ENCODE measurements at regions of chr3 and their contacts with region 1.

Region 1: DNA sequence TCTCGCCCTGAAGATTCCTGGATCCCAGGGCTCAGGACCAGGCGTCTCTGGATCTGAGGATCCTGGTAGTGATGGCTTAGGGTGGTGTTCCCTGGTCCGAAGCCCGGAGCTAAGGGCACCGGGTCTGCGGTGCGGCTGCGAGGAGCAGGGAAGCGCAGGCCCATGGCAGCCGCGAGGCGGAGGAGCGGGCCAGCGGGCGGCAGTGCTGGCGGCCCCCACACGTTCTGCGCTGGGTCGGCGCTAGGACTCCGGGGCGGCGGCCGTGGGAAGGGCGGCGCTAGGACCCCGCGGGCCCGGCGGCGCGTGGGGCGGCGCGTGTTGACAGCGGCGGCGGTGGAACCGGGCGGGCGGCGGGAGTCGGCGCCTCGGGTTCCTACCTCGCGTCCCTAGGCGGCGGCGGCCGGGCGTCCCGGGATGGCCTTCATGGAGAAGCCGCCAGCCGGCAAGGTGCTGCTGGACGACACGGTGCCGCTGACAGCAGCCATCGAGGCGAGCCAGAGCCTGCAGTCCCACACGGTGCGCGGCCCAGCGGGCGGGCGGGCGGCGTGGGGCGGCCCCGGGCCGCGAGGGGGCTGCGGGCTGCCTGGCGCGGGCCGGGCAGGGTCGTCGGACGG is at the start of gene PXK:
- ATAC-seq: peak; percentile 86 to 94 (median 90)
- H3K4me3 ChIP-seq: peak within 1 kb of the TSS; percentile 69 to 85 (median 78)
- H3K27ac ChIP-seq: peak within 1 kb of the TSS; percentile 22 to 38
- H3K4me1 ChIP-seq: peaks cover 11 to 13% of the 10 kb centered on the region in 2 donors
- total RNA-seq, gene PXK: 8.4 to 34.6 (median 18.5) TPM

Region 2: GRCh38 chr3:58520403-58521335 is 188.0 kb after region 1 on chr3:
- in situ Hi-C with region 1: loop called in 2 of 9 experiments (anchors 25 kb)
- ATAC-seq: peak; percentile 25 to 72 (median 47)
- H3K4me3 ChIP-seq: no peak overlapping the region
- H3K27ac ChIP-seq: no peak overlapping the region
- H3K4me1 ChIP-seq: peaks cover 15 to 17% of the 10 kb centered on the region in 2 donors

Region 3: DNA sequence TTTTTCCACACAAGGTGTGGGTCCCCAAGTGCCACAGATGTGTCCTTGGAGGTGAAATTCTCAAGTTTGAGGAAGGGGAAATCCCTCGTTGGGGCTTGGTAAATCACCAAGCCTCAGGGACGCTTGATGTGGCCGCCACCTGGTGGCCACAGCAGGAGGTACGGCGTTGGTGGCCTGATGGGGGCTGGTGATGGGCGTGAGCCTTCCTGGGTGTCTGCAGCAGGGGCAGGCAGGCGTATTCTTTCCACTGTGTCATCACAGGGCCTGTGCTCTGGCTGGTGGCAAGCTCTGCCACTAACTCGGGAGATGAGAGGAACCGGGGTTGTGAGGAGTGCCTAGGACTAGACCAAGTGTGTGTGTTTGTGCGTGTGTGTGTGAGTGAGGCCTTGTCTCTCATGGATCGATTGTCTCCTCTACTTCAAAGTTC is 200.1 kb after region 1 on chr3:
- in situ Hi-C with region 1: loop called in 1 of 9 experiments (anchors 25 kb)
- ATAC-seq: peak; percentile 66 to 94 (median 88)
- H3K4me3 ChIP-seq: no peak overlapping the region
- H3K27ac ChIP-seq: no peak overlapping the region
- H3K4me1 ChIP-seq: peaks cover 20 to 21% of the 10 kb centered on the region in 2 donors